GM12878 (cell line): ENCODE measurements at regions of chr1 and their contacts with region 1.

Region 1: DNA sequence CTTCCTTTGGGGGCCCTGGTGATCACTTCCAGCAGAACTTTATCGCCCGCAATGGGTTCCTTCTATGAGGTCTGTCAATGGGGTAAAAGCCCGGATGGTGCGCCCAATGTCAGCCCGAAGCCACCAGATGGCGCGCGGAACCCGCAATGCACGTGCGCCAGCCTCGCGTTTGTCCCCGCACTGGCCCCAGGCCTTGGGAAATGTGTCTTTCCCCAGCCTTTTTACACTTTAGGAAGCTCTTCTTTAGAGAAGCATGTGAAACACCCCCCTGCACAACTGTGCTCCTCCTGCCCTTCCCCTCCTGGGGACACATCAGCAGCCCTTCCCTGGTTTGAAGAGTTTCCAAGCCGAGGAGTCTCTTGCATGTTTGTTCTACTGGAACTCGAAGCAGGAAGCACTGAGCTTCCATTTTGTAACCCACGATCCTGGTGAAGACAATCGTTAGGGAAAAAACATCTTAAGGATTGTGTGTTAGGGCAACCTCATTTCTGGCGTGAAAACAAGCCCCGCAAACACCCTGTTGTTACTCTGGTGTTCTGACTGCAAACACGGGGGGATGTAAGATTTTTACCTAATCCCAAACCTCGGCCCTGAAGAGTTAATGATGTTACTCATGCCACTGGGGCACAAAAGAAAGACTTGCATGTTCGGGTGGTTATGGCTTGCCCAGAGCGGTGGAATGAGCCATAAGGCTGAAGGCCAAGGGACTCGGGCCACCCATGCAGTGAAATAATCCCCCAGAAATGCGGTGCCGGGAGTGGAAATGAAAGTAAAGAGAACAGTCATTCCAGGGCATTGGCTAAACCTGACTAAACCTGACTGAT is 20.4 kb upstream of the TARBP1 start:
- DNase-seq: no peak
- ATAC-seq: peak; percentile 77
- H3K4me3 ChIP-seq: peak overlapping the region; percentile 14
- H3K27ac ChIP-seq: peak overlapping the region; percentile 69
- H3K4me1 ChIP-seq: peaks cover 45% of the 10 kb centered on the region
- H3K27me3 ChIP-seq: no peaks in the 10 kb centered on the region
- CTCF ChIP-seq: peak; percentile 94 to 96 (median 95); a peak in 5 of 6 replicates
- EP300 ChIP-seq: no peak
- POLR2A ChIP-seq: no peak
- RAD21 ChIP-seq: peak; percentile 96

Region 2: DNA sequence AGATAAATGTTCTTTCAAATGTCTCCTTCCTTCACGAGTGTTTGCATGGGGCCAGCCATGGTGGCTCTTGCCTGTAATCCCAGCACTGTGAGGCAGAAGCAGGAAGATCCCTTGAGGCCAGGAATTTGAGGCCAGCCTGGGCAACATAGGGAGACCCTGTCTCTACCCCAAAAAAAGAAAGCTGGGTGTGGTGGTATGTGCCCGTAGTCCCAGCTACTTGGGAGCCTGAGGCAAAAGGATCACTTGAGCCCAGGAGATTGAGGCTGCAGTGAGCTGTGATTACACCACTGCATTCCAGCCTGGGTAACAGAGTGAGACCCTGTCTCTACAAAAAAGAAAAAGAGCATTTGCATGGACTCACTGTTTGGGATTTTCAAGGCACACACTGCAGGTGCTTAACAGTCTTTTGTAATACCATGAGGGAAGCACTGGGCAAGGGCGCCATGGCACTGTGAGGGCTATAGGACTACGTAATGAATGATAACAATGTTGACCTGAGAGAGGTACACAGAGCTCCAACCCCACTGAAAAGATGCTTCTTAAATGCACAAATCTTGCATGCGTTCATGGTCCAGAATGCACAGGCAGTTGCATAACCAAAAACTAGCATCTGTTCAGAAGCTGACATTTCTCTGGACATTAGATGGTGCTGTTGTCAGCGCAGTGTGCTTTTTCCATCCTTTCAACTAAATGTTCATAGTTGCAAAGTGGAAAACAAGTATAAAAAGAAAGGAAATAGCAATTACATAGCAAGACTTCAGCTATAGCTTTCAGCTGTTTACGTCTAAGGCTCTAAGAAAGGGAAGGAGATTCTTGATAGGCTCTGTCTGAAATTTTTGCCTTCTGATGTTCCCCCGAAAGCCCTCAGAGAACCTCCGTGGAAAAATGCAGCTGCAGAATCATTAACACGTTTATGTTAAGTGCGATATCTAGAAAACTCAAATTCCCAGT is 12.6 kb before region 1 on chr1:
- CTCF ChIA-PET with region 1: interaction called, 13 read pairs
- POLR2A ChIA-PET with region 1: interaction called, 5 read pairs
- RAD21 ChIA-PET with region 1: interaction called, 17 read pairs
- SMC1A ChIA-PET with region 1: interaction called, 13 read pairs
- in situ Hi-C with region 1: no loop called
- intact Hi-C with region 1: no loop called
- DNase-seq: no peak
- ATAC-seq: peak; percentile 63
- H3K4me3 ChIP-seq: no peak overlapping the region
- H3K27ac ChIP-seq: no peak overlapping the region
- H3K4me1 ChIP-seq: peaks cover 34% of the 10 kb centered on the region
- H3K27me3 ChIP-seq: no peaks in the 10 kb centered on the region
- CTCF ChIP-seq: peak; percentile 59 to 73 (median 72); a peak in 5 of 6 replicates
- EP300 ChIP-seq: no peak
- POLR2A ChIP-seq: no peak
- RAD21 ChIP-seq: peak; percentile 92

Region 3: GRCh38 chr1:234599617-234600417 is 100.5 kb after region 1 on chr1:
- CTCF ChIA-PET with region 1: interaction called, 39 read pairs
- POLR2A ChIA-PET with region 1: interaction called, 10 read pairs
- RAD21 ChIA-PET with region 1: interaction called, 64 read pairs
- SMC1A ChIA-PET with region 1: interaction called, 25 read pairs
- in situ Hi-C with region 1: loop called (anchors 5 kb)
- intact Hi-C with region 1: loop called (anchors 1 kb)
- DNase-seq: no peak
- ATAC-seq: peak; percentile 76
- H3K4me3 ChIP-seq: peak overlapping the region; percentile 67; the same call in 1 of the 2 replicates
- H3K27ac ChIP-seq: peak overlapping the region; percentile 75
- H3K4me1 ChIP-seq: peaks cover 22% of the 10 kb centered on the region
- H3K27me3 ChIP-seq: no peaks in the 10 kb centered on the region
- CTCF ChIP-seq: 0 out of 6 replicates have a peak, but pooled peaks of 1 of the 3 experiments have one; percentile 5
- EP300 ChIP-seq: 0 out of 4 replicates have a peak, but pooled peaks of 1 of the 2 experiments have one; percentile 42
- POLR2A ChIP-seq: peak; percentile 70; the same call in 1 of the 2 replicates
- RAD21 ChIP-seq: no peak

Region 4: GRCh38 chr1:234638832-234639799 is 139.8 kb after region 1 on chr1:
- CTCF ChIA-PET with region 1: no interaction called
- POLR2A ChIA-PET with region 1: no interaction called
- RAD21 ChIA-PET with region 1: no interaction called
- SMC1A ChIA-PET with region 1: no interaction called
- in situ Hi-C with region 1: no loop called
- intact Hi-C with region 1: no loop called
- DNase-seq: no peak
- ATAC-seq: no peak; the same call in 2 of the 3 replicates
- H3K4me3 ChIP-seq: no peak overlapping the region
- H3K27ac ChIP-seq: no peak overlapping the region
- H3K4me1 ChIP-seq: no peaks in the 10 kb centered on the region
- H3K27me3 ChIP-seq: no peaks in the 10 kb centered on the region
- CTCF ChIP-seq: no peak
- EP300 ChIP-seq: no peak
- POLR2A ChIP-seq: no peak
- RAD21 ChIP-seq: no peak

Region 5: DNA sequence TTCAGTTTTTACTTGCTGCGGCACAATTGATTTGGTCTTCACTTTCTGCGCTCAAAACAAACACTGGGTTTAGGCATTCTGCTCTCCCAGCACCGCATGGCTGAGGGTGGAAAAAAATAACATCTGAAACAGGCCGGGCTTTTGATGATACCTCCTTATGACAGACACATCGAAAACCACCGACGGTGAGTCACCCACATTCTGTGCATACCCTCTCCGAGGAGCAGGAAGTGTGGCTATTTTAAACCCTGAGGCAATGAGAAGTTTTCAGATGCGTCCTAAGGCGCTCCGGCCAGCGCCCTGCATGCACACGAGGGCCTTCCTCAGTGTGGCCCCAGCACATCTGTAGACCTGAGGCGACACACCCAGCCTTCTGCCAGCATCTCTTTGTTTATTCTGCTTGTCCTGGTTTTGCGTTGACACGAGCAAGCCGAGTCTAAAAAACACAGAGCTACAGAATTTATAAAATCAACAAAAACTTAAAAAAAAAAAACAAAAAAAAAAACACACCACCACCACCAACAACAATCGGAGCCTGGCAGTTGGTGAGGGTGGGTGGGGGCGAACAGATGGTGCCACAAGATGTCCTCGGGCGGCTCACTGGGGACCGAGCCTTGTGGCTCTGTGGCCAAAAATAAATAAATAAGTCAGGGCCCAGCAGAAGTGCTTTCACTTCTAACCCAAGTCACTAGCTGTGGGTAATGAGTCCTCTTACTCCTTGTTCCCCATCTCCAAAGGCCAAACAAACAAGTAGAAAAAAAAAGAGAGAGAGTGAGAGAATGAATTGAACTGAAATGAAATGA is 273.2 kb after region 1 on chr1:
- CTCF ChIA-PET with region 1: interaction called, 10 read pairs
- POLR2A ChIA-PET with region 1: interaction called, 4 read pairs
- RAD21 ChIA-PET with region 1: interaction called, 21 read pairs
- SMC1A ChIA-PET with region 1: interaction called, 10 read pairs
- in situ Hi-C with region 1: no loop called
- intact Hi-C with region 1: loop called (anchors 2 kb)
- DNase-seq: peak; percentile 97
- ATAC-seq: peak; percentile 92
- H3K4me3 ChIP-seq: peak overlapping the region; percentile 13; the same call in 1 of the 2 replicates
- H3K27ac ChIP-seq: peak overlapping the region; percentile 89
- H3K4me1 ChIP-seq: peaks cover 37% of the 10 kb centered on the region
- H3K27me3 ChIP-seq: peaks cover 6 to 11% of the 10 kb centered on the region in 2 experiments; a peak in 3 of 4 replicates
- CTCF ChIP-seq: no peak
- EP300 ChIP-seq: peak; percentile 88 to 93; a peak in 3 of 4 replicates
- POLR2A ChIP-seq: peak; percentile 77
- RAD21 ChIP-seq: 0 out of 2 replicates have a peak, but pooled peaks have one; percentile 13

Region 6: GRCh38 chr1:234963180-234963903 is 464.0 kb after region 1 on chr1:
- CTCF ChIA-PET with region 1: interaction called, 4 read pairs
- POLR2A ChIA-PET with region 1: no interaction called
- RAD21 ChIA-PET with region 1: interaction called, 13 read pairs
- SMC1A ChIA-PET with region 1: interaction called, 7 read pairs
- in situ Hi-C with region 1: no loop called
- intact Hi-C with region 1: no loop called
- DNase-seq: peak; percentile 97
- ATAC-seq: peak; percentile 79
- H3K4me3 ChIP-seq: peak overlapping the region; percentile 45; the same call in 1 of the 2 replicates
- H3K27ac ChIP-seq: peak overlapping the region; percentile 96
- H3K4me1 ChIP-seq: peaks cover 59% of the 10 kb centered on the region
- H3K27me3 ChIP-seq: no peaks in the 10 kb centered on the region
- CTCF ChIP-seq: no peak
- EP300 ChIP-seq: peak; percentile 95 to 99
- POLR2A ChIP-seq: no peak
- RAD21 ChIP-seq: 0 out of 2 replicates have a peak, but pooled peaks have one; percentile 24

Region 7: GRCh38 chr1:235006132-235006943 is 507.0 kb after region 1 on chr1:
- CTCF ChIA-PET with region 1: no interaction called
- POLR2A ChIA-PET with region 1: interaction called, 10 read pairs
- RAD21 ChIA-PET with region 1: interaction called, 6 read pairs
- SMC1A ChIA-PET with region 1: interaction called, 6 read pairs
- in situ Hi-C with region 1: no loop called
- intact Hi-C with region 1: loop called (anchors 1 kb)
- DNase-seq: peak; percentile 74
- ATAC-seq: peak; percentile 44
- H3K4me3 ChIP-seq: no peak overlapping the region
- H3K27ac ChIP-seq: peak overlapping the region; percentile 79
- H3K4me1 ChIP-seq: peaks cover 81% of the 10 kb centered on the region
- H3K27me3 ChIP-seq: no peaks in the 10 kb centered on the region
- CTCF ChIP-seq: no peak
- EP300 ChIP-seq: no peak
- POLR2A ChIP-seq: no peak
- RAD21 ChIP-seq: no peak